ENCODE measurements at regions of chr11 and their contacts with region 1.

Region 1: GRCh38 chr11:61639816-61640443 is 40.3 kb upstream of the DAGLA start:
- DNase-seq: no peak
- ATAC-seq: no peak
- H3K4me3 ChIP-seq: no peak overlapping the region
- H3K27ac ChIP-seq: no peak overlapping the region
- H3K4me1 ChIP-seq: no peaks in the 10 kb centered on the region
- CTCF ChIP-seq: no peak
- EP300 ChIP-seq: no peak
- POLR2A ChIP-seq: no peak
- RAD21 ChIP-seq: no peak

Region 2: GRCh38 chr11:61446211-61446651 is 193.7 kb before region 1 on chr11:
- CTCF ChIA-PET with region 1: interaction called, 70 read pairs
- POLR2A ChIA-PET with region 1: no interaction called
- DNase-seq: peak; percentile 90
- ATAC-seq: peak; percentile 98 to 99
- H3K4me3 ChIP-seq: no peak overlapping the region
- H3K27ac ChIP-seq: peak overlapping the region; percentile 44 to 79; a peak in 5 of 6 replicates
- H3K4me1 ChIP-seq: peaks cover 12% of the 10 kb centered on the region
- CTCF ChIP-seq: peak; percentile 91
- EP300 ChIP-seq: no peak
- POLR2A ChIP-seq: no peak
- RAD21 ChIP-seq: peak; percentile 71 to 77

Region 3: DNA sequence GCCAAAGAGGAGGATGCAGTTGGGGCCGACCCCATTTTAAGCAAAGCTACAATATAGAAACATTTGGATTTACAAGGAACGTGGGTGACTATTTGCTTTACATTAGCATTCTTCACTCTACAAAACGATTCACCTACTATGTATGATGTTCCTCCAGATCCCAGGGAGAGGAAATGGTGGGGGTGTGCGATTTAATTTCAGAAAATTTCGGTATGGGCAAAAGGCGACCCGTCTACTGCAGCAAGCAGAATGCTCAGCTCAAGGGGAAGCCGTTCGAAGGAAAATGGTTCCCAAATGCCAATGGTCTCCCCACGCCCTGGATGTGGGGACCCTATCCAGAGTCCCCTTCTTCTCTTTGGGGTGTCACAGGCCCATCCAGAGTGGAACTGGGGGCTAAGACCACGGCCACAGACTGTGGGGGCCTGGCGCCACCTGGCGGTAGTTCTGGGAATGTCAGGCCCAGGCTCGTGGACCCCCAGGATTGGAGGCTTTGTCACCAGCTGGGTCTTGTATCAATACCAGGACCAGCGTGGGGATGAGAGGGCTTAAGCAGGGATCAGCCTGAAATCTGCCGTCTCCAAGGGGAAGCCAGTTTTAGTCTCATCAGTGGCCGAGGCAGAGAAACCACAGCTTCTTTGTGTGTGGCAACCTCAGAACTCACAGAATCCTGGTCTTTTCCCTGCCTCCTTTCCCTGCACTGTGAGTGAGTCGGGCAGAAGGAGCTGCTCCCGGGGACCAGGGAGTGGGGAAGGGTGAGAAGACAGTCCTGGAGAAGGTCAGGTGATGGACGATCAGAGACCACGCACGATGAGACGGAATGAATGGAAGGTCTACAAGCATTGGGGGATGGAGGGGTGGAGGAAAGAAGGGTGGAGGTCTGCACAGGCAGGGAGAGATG is 123.0 kb before region 1 on chr11:
- CTCF ChIA-PET with region 1: interaction called, 24 read pairs
- POLR2A ChIA-PET with region 1: no interaction called
- DNase-seq: peak; percentile 28 to 86
- ATAC-seq: peak in 1 of 2 experiments; percentile 81; a peak in 3 of 6 replicates
- H3K4me3 ChIP-seq: no peak overlapping the region
- H3K27ac ChIP-seq: no peak overlapping the region
- H3K4me1 ChIP-seq: peaks cover 6% of the 10 kb centered on the region; the same call in 1 of the 3 replicates
- CTCF ChIP-seq: peak; percentile 93
- EP300 ChIP-seq: no peak
- POLR2A ChIP-seq: no peak
- RAD21 ChIP-seq: peak; percentile 83 to 86

Region 4: DNA sequence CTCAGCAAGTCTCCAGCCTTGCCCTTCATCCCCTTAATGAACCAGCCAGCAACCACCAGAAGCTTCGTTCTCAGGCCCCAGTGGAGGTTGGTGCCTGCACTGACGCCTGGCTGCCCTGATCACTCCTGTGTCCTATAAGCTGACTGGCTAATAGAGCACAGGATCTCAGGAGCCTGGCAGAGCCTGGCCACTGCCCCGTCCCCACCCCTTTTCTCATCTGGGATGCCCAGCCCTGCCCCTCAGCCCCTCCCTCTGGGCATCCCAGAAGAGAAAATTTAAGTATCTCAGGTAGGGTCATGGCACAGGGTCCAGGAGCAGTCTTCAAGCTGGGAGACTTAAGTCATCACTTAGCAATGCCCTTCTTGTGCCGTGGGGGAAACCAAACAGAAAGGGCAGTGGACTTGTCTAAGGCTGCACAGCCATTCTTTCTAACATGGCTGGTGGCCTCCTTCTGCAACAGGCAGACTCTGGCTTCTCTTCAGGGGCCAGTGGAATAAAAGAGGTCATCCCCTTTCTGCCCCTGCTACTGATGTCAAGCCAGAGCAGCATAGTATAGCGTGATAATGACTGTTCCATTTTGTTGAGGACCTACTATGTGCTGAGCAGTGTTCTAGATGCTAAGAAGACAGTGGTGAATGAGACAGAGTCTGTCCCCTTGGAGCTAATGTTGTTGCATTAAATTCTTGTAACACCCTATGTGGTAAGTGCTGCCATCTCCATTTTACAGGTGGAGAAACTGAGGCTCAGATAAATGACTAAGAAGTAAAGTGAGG is 43.6 kb before region 1 on chr11:
- CTCF ChIA-PET with region 1: interaction called, 11 read pairs
- POLR2A ChIA-PET with region 1: no interaction called
- DNase-seq: no peak
- ATAC-seq: peak in 1 of 2 experiments; percentile 16; a peak in 2 of 6 replicates
- H3K4me3 ChIP-seq: no peak overlapping the region
- H3K27ac ChIP-seq: no peak overlapping the region
- H3K4me1 ChIP-seq: no peaks in the 10 kb centered on the region
- CTCF ChIP-seq: no peak
- EP300 ChIP-seq: no peak
- POLR2A ChIP-seq: no peak
- RAD21 ChIP-seq: no peak

Region 5: DNA sequence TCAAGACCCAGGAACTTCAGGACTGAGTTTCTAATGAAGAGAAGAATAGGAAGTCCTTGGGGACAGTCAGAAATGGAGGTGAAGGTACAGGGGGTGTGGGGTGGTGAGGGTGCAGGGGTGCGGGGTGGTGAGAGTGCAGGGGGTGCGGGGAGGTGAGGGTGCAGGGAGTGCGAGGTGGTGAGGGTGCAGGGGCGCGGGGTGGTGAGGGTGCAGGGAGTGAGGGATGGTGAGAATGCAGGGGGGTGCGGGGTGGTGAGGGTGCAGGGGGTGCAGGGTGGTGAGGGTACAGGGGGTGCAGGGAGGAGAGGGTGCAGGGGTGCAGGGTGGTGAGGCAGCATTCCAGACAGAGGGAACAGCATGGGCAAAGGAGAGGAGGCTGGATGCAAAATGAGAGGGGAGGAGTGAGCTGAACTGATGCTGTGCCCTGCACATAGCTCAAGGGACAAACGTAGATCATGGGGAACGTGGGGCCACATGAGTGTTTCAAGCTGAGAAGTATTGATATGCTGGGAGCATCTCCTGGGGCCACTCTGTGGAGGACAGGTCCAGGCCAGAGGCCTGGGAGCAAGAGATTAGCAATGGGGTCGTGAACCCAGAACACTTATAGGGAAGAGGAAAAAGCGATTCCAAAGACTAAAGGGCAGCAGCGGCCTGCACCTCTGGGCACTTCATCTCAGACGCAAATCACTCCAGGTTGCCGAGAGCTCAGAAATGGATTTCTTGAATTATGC is 16.6 kb after region 1 on chr11:
- CTCF ChIA-PET with region 1: interaction called, 21 read pairs
- POLR2A ChIA-PET with region 1: no interaction called
- DNase-seq: no peak
- ATAC-seq: peak in 1 of 2 experiments; percentile 31; a peak in 3 of 6 replicates
- H3K4me3 ChIP-seq: no peak overlapping the region
- H3K27ac ChIP-seq: peak overlapping the region; percentile 49 to 78; a peak in 5 of 6 replicates
- H3K4me1 ChIP-seq: peaks cover 36% of the 10 kb centered on the region
- CTCF ChIP-seq: no peak
- EP300 ChIP-seq: no peak
- POLR2A ChIP-seq: no peak
- RAD21 ChIP-seq: no peak

Region 6: DNA sequence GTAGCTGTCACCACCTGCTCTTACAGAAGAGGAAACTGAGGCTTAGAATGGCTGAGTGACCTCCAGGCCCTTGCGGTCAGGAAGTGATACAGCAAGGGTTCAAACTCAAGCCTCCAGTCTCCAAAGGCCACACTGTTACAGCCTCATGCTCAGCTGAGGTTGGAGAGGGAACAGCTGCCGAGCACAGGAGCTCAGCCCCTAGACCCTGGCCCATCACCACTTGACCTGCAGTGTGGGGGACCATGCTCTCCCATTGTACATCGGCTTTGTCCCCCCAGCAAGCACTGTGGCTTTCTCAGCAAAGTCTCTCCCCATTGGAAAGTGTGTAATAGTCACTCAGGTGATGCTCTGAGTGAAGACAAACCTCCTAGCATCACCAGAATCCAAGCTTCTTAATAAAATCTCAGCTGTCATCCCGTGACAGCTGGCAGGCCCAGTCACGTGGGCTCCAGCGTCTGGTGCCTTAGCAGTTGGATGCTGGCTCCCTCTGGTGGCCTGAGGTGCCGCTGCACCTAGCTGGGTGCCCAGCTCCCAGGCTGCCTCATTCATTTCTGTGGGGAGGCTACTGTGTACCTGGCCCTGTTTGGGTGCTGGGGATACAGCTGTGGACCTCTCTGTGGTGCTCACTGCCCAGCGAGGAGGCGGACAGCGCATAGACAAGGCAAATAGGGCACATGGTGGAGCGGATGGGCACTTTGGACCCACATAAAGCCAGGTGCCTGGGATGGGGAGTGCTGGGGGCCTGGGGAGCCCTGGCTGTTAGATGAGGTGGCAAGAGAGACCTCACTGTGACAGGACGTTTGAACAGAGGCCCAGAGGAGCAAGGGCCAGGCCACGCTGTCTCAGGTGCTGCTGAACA is 93.4 kb after region 1 on chr11:
- CTCF ChIA-PET with region 1: interaction called, 11 read pairs
- POLR2A ChIA-PET with region 1: no interaction called
- DNase-seq: peak; percentile 81 to 95
- ATAC-seq: peak; percentile 69 to 89
- H3K4me3 ChIP-seq: no peak overlapping the region
- H3K27ac ChIP-seq: 0 out of 6 replicates have a peak overlapping the region, but pooled peaks of 1 of the 2 experiments have one; percentile 41
- H3K4me1 ChIP-seq: peaks cover 27% of the 10 kb centered on the region
- CTCF ChIP-seq: peak; percentile 94
- EP300 ChIP-seq: no peak
- POLR2A ChIP-seq: no peak
- RAD21 ChIP-seq: peak; percentile 93 to 97

Measured in A549 (cell line).